Naive thymus-derived CD4-positive, alpha-beta T cell (primary cell): ENCODE measurements at regions of chr5 and their contacts with region 1.

Region 1: DNA sequence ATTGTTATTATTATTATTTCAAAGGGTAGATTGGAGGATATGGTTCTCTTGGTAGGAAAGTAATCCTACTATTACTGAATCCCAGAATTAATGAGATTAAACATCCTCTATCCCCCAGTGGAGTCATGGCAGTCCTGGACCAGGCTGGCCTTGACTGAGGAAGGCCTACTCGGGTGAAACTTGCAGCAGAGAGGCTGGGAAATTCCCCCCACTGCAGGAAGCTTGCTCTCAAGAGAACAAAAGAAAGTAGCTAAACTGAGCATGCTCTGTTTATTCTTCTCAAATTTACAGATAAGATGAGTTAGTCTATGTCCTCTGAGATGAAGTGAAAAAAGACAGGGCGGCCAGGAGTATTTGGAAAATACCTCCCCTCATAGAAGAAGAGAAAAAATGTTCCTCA is 233.9 kb upstream of the RPS23 start:
- DNase-seq: peak in 2 of 9 donors; percentile 5 to 23
- ATAC-seq: no peak
- H3K4me3 ChIP-seq: no peak overlapping the region
- H3K4me3 Mint-ChIP-seq: no peak overlapping the region
- H3K27ac ChIP-seq: no peak overlapping the region
- H3K27ac Mint-ChIP-seq: no peak overlapping the region
- H3K4me1 ChIP-seq: no peaks in the 10 kb centered on the region
- H3K4me1 Mint-ChIP-seq: peaks cover 0 to 10% (median 6%) of the 10 kb centered on the region in 7 donors
- H3K27me3 ChIP-seq: no peaks in the 10 kb centered on the region
- H3K27me3 Mint-ChIP-seq: peaks cover 0 to 8% (median 4%) of the 10 kb centered on the region in 5 donors

Region 2: GRCh38 chr5:81971712-81972495 is 540.1 kb before region 1 on chr5 and contains the start of gene ATG10:
- CTCF ChIA-PET with region 1: no interaction called
- POLR2A ChIA-PET with region 1: no interaction called
- intact Hi-C with region 1: no loop called
- DNase-seq: peak; percentile 78 to 93 (median 84)
- ATAC-seq: peak; percentile 95
- H3K4me3 ChIP-seq: peak within 1 kb of the TSS; percentile 67
- H3K4me3 Mint-ChIP-seq: peak within 1 kb of the TSS; percentile 91 to 100 (median 97)
- H3K27ac ChIP-seq: peak within 1 kb of the TSS; percentile 97
- H3K27ac Mint-ChIP-seq: peak within 1 kb of the TSS; percentile 95 to 99 (median 99)
- H3K4me1 ChIP-seq: peaks cover 5 to 10% of the 10 kb centered on the region in 2 donors
- H3K4me1 Mint-ChIP-seq: peaks cover 9 to 40% (median 33%) of the 10 kb centered on the region in 7 donors
- H3K27me3 ChIP-seq: no peaks in the 10 kb centered on the region
- H3K27me3 Mint-ChIP-seq: no peaks in the 10 kb centered on the region
- total RNA-seq, gene ATG10: 6.4 to 9.6 (median 8.2) TPM

Region 3: GRCh38 chr5:82205005-82205404 is 307.0 kb before region 1 on chr5:
- CTCF ChIA-PET with region 1: no interaction called
- POLR2A ChIA-PET with region 1: no interaction called
- intact Hi-C with region 1: no loop called
- DNase-seq: no peak
- ATAC-seq: no peak
- H3K4me3 ChIP-seq: no peak overlapping the region
- H3K4me3 Mint-ChIP-seq: no peak overlapping the region
- H3K27ac ChIP-seq: no peak overlapping the region
- H3K27ac Mint-ChIP-seq: no peak overlapping the region
- H3K4me1 ChIP-seq: no peaks in the 10 kb centered on the region
- H3K4me1 Mint-ChIP-seq: no peaks in the 10 kb centered on the region
- H3K27me3 ChIP-seq: no peaks in the 10 kb centered on the region
- H3K27me3 Mint-ChIP-seq: no peaks in the 10 kb centered on the region

Region 4: GRCh38 chr5:82522897-82523296 is 10.9 kb after region 1 on chr5:
- CTCF ChIA-PET with region 1: no interaction called
- POLR2A ChIA-PET with region 1: no interaction called
- intact Hi-C with region 1: loop called in 1 of 2 experiments (anchors 1 kb)
- DNase-seq: no peak
- ATAC-seq: no peak
- H3K4me3 ChIP-seq: no peak overlapping the region
- H3K4me3 Mint-ChIP-seq: no peak overlapping the region
- H3K27ac ChIP-seq: no peak overlapping the region
- H3K27ac Mint-ChIP-seq: no peak overlapping the region
- H3K4me1 ChIP-seq: no peaks in the 10 kb centered on the region
- H3K4me1 Mint-ChIP-seq: peaks cover 0 to 8% (median 0%) of the 10 kb centered on the region in 7 donors
- H3K27me3 ChIP-seq: no peaks in the 10 kb centered on the region
- H3K27me3 Mint-ChIP-seq: peaks cover 0 to 5% (median under 1%) of the 10 kb centered on the region in 5 donors